Caco-2 (cell line): ENCODE measurements at regions of chr2 and their contacts with region 1.

Region 1: GRCh38 chr2:25521665-25522387 is 151.6 kb downstream of the DTNB start:
- DNase-seq: peak in 1 of 2 experiments; percentile 55
- H3K4me3 ChIP-seq: no peak overlapping the region
- H3K4me3 Mint-ChIP-seq: no peak overlapping the region
- H3K27ac Mint-ChIP-seq: no peak overlapping the region
- H3K4me1 ChIP-seq: peaks cover 6% of the 10 kb centered on the region; the same call in 1 of the 2 replicates
- H3K4me1 Mint-ChIP-seq: peaks cover 7% of the 10 kb centered on the region
- H3K27me3 ChIP-seq: no peaks in the 10 kb centered on the region
- H3K27me3 Mint-ChIP-seq: no peaks in the 10 kb centered on the region
- CTCF ChIP-seq: peak; percentile 81 to 86

Region 2: DNA sequence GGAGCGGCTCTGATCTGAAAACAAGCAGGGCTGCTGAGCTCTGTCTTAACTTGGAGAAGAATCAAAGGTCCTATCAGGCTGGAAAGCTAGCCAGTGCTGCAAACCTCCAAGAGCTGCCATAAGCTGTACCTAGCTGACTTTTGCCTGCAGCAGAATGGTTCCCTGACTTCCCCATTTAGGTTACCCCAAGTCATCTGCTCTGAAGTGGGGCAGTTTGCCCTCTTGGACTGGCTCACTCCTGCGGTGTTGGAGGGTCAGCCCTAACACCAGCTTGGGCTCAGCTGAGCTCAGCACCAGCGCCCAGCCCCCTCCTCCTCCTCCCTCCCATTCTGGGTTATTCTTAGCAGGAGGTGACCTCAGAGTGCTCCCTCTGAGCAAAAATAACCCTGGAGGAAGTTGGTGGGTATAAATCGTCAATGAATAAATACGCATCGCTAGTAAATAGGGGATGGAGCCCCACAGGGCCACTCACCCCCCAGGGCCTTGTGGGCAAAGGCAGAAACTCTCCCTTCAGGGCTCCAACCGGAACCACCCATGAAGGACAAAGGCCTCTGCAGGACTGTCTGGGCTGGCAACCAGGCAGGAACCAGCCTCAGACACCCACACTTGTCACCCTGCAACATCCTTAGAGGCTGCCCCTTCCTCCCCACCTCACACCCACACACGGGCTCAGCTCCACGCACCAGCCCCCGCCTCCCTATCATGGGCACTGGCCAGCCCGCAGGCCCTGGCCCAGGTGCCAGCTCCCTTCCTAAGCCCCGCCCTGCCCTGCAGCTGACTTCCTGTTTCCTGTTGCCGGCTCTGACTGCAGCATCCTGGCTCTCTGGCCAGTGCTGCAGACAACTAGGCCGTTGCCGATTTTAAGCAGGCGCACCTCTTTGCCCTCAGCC is 227.0 kb before region 1 on chr2:
- CTCF ChIA-PET with region 1: no interaction called
- POLR2A ChIA-PET with region 1: no interaction called
- intact Hi-C with region 1: no loop called
- DNase-seq: no peak
- H3K4me3 ChIP-seq: no peak overlapping the region
- H3K4me3 Mint-ChIP-seq: no peak overlapping the region
- H3K27ac Mint-ChIP-seq: no peak overlapping the region
- H3K4me1 ChIP-seq: no peaks in the 10 kb centered on the region
- H3K4me1 Mint-ChIP-seq: no peaks in the 10 kb centered on the region
- H3K27me3 ChIP-seq: no peaks in the 10 kb centered on the region
- H3K27me3 Mint-ChIP-seq: no peaks in the 10 kb centered on the region
- CTCF ChIP-seq: no peak

Region 3: DNA sequence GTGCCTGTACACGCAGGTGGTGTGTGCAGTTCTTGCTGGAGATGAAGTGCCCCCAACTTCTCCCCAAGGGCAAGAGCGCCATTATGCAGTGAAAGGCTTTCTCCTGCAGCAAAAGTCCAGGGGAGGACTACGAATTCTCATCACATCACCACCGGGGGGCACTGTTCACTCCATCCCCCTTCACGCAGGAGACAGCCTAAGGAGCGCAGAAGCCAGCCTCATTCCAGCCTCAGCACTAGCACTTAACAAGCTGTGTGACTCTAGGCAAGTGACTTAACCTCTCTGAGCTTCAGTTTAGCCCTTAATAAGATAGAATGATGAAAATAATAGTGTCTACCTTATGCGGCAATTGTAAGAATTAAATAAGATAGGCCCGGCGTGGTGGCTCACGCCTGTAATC is 212.4 kb before region 1 on chr2:
- CTCF ChIA-PET with region 1: no interaction called
- POLR2A ChIA-PET with region 1: no interaction called
- intact Hi-C with region 1: loop called (anchors 1 kb)
- DNase-seq: peak; percentile 58 to 68
- H3K4me3 ChIP-seq: no peak overlapping the region
- H3K4me3 Mint-ChIP-seq: no peak overlapping the region
- H3K27ac Mint-ChIP-seq: no peak overlapping the region
- H3K4me1 ChIP-seq: 0 out of 2 replicates have a peak, but pooled peaks cover 3% of the 10 kb centered on the region
- H3K4me1 Mint-ChIP-seq: peaks cover 5% of the 10 kb centered on the region
- H3K27me3 ChIP-seq: no peaks in the 10 kb centered on the region
- H3K27me3 Mint-ChIP-seq: no peaks in the 10 kb centered on the region
- CTCF ChIP-seq: peak; percentile 49 to 53

Region 4: DNA sequence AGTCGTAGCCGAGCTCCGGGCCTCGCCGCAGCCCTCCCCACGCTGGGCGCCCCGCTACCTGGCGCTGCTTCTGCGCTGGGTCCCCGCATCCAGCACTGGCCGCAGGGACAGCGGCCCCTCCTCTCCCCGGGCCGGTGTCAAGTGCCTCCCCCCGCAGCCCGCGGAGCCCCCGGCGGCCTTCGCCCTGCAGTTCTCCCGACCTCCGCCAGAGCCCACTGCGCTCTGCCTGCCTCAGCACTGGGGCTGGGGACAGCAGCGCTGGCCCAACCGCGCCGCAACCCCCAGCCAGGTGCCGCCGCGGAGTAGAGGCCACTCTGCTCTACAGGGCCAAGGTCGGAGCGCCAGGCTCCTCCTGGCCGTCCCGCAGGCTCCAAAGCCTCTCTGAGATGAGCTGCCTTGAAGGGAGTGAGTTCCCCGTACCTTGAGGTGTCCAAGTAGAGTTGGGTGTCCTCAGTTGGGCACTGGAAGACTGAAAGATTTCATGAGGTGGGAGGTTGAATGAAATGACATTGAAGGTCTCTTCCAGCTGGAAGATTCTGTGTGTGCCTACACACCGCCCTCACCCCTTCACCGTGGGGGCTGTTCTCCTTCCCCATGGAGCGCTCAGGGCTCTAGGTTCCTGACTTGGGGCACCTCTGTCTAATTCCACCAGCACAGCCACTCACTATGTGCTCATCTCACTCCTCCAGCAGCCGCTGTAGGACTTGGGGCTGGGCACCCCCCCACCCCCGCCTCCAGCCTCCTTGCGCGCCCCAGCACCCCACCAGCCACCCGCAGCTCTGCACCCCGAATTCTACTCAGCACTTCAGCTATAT is 179.2 kb before region 1 on chr2:
- CTCF ChIA-PET with region 1: no interaction called
- POLR2A ChIA-PET with region 1: no interaction called
- intact Hi-C with region 1: loop called (anchors 1 kb)
- DNase-seq: peak; percentile 89 to 95
- H3K4me3 ChIP-seq: peak overlapping the region; percentile 37
- H3K4me3 Mint-ChIP-seq: peak overlapping the region; percentile 85
- H3K27ac Mint-ChIP-seq: peak overlapping the region; percentile 45
- H3K4me1 ChIP-seq: 0 out of 2 replicates have a peak, but pooled peaks cover 6% of the 10 kb centered on the region
- H3K4me1 Mint-ChIP-seq: peaks cover 5% of the 10 kb centered on the region
- H3K27me3 ChIP-seq: no peaks in the 10 kb centered on the region
- H3K27me3 Mint-ChIP-seq: no peaks in the 10 kb centered on the region
- CTCF ChIP-seq: peak; percentile 91 to 98

Region 5: DNA sequence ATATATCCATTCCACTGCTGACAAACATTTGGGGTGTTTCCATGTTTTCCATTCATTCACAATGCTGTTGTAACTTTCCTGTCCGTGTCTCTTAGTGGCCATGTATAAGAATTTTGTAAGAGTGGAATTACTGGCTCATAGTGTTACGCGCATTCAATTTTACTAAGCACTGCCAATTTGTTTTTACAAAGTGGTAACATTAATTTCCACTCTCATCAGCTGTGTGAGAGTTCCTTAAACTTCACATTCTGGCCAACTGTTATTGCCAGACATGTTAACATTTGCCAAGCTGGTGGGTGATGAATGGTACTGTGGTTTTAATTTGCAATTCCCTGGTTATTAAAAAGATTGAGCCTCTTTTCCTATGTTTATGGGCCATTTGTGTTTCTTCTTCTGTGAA is 17.3 kb after region 1 on chr2:
- CTCF ChIA-PET with region 1: no interaction called
- POLR2A ChIA-PET with region 1: no interaction called
- intact Hi-C with region 1: no loop called
- DNase-seq: no peak
- H3K4me3 ChIP-seq: no peak overlapping the region
- H3K4me3 Mint-ChIP-seq: no peak overlapping the region
- H3K27ac Mint-ChIP-seq: no peak overlapping the region
- H3K4me1 ChIP-seq: no peaks in the 10 kb centered on the region
- H3K4me1 Mint-ChIP-seq: peaks cover 7% of the 10 kb centered on the region
- H3K27me3 ChIP-seq: no peaks in the 10 kb centered on the region
- H3K27me3 Mint-ChIP-seq: no peaks in the 10 kb centered on the region
- CTCF ChIP-seq: no peak